ENCODE measurements at regions of chr15 and their contacts with region 1.

Region 1: GRCh38 chr15:96340598-96341512 is 10.4 kb downstream of the NR2F2 start:
- DNase-seq: no peak
- ATAC-seq: no peak
- H3K4me3 Mint-ChIP-seq: no peak overlapping the region
- H3K27ac Mint-ChIP-seq: no peak overlapping the region
- H3K4me1 Mint-ChIP-seq: peaks cover 4% of the 10 kb centered on the region
- H3K27me3 Mint-ChIP-seq: peaks cover 84% of the 10 kb centered on the region
- CTCF ChIP-seq: no peak

Region 2: DNA sequence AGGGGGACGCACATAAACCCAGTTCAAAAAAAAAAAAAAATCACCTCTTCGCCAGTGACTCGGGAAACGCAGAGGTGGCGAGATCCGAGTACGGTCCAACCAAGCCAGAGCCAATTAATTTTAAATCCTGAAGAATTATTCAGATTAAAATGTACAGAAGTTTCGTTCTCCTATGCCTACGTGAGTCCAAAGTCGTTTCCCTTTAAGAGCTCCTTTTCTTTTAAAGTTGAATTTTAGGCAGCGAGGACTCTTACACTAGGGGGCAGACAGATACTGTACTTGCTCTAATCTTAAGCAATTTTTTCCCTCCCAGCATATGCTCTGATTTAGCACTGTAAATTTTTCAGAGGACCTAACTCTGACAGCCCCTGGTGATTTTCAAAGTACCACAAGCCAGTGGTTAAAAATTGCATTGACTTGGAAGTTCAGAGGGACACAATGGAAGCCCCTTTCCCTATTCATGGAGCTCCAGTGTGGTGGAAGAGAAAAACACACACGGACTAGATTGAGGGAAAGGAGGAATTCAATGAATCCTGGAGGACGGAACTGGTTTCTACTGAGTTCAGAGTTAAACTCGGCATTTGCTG is 13.6 kb before region 1 on chr15:
- CTCF ChIA-PET with region 1: interaction called, 10 read pairs
- POLR2A ChIA-PET with region 1: no interaction called
- intact Hi-C with region 1: no loop called
- DNase-seq: no peak
- ATAC-seq: peak; percentile 48
- H3K4me3 Mint-ChIP-seq: no peak overlapping the region
- H3K27ac Mint-ChIP-seq: no peak overlapping the region
- H3K4me1 Mint-ChIP-seq: peaks cover 11% of the 10 kb centered on the region
- H3K27me3 Mint-ChIP-seq: peaks cover 77% of the 10 kb centered on the region
- CTCF ChIP-seq: peak; percentile 40

Region 3: GRCh38 chr15:96409215-96410138 is 68.6 kb after region 1 on chr15:
- CTCF ChIA-PET with region 1: no interaction called
- POLR2A ChIA-PET with region 1: no interaction called
- intact Hi-C with region 1: loop called (anchors 5 kb)
- DNase-seq: no peak
- ATAC-seq: no peak
- H3K4me3 Mint-ChIP-seq: no peak overlapping the region
- H3K27ac Mint-ChIP-seq: no peak overlapping the region
- H3K4me1 Mint-ChIP-seq: peaks cover 2% of the 10 kb centered on the region
- H3K27me3 Mint-ChIP-seq: peaks cover 67% of the 10 kb centered on the region
- CTCF ChIP-seq: no peak